Activated CD4-positive, alpha-beta T cell treated with anti-CD3 and anti-CD28 coated beads for 36 hours (primary cell): ENCODE measurements at regions of chr1 and their contacts with region 1.

Region 1: GRCh38 chr1:19390901-19391595 is 78.9 kb downstream of the SLC66A1 start:
- DNase-seq: peak; percentile 77
- ATAC-seq: peak; percentile 52
- H3K4me3 Mint-ChIP-seq: peak overlapping the region; percentile 73
- H3K27ac Mint-ChIP-seq: peak overlapping the region; percentile 95
- H3K4me1 Mint-ChIP-seq: peaks cover 81% of the 10 kb centered on the region
- H3K27me3 Mint-ChIP-seq: no peaks in the 10 kb centered on the region

Region 2: DNA sequence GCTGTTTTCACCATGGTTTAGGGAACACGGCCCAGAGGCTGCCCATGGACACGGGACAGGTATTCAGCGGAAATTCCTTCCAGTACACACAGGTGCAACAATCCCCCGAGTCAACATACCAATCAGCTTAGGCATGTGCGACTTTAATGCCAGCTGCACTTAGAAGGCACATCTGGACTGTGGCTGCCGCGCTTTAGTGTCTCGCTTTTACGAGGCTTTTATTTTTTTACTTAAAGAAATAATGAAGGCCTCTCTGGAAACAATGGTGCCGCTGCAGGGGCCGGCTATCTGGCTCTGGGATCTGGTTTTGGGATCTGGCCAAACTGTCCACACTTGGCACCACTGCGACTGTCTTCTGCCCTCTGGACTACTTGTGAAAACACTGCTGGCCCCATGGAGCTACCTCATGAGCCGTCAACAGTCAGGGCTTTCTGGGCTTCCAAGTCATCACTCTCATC is 23.4 kb before region 1 on chr1:
- CTCF ChIA-PET with region 1: no interaction called
- POLR2A ChIA-PET with region 1: no interaction called
- intact Hi-C with region 1: no loop called
- DNase-seq: no peak
- ATAC-seq: no peak
- H3K4me3 Mint-ChIP-seq: no peak overlapping the region
- H3K27ac Mint-ChIP-seq: no peak overlapping the region
- H3K4me1 Mint-ChIP-seq: peaks cover 12% of the 10 kb centered on the region
- H3K27me3 Mint-ChIP-seq: no peaks in the 10 kb centered on the region

Region 3: DNA sequence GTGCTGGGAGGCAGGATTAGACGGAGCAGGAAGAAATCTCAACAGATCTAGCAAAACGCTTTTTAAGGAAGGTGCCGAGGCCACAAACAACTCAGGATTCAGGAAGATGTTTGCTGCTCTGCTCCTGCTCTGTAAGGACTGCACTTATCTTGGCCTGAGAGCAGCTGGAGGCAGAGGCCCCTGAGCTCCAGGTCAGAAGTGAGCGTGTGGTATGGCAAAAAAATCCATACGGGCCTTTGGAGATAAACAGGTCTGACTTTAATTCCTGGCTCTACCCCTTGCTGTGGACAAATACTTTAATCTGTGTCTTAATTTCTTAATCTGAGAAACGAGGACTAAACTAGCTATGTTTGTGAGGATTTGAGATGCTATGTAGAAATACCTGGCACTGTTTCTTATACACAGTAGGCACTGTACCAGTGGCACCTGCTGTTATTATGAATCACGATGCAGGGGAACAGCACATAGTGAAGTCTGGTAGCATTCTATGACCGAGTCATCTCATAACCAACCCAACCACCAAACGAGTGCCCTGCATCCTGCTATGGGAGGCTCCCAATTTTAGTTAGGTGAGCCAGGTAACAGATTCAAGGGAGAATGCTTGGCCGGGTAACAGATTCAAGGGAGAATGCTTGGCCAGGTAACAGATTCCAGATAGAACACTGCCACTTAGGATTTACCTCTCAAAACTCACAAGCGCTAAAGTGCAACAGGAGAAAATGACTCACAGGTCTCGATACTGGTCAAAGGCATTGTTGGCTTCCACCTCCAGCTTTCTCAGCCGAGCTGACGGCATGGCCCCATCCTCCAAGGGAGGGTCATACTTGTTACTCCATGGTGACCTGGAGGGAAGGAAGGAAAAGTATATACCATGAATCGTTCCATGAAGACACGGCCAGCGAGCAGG is 13.0 kb before region 1 on chr1:
- CTCF ChIA-PET with region 1: interaction called, 12 read pairs
- POLR2A ChIA-PET with region 1: no interaction called
- intact Hi-C with region 1: no loop called
- DNase-seq: peak; percentile 57
- ATAC-seq: peak; percentile 93
- H3K4me3 Mint-ChIP-seq: no peak overlapping the region
- H3K27ac Mint-ChIP-seq: peak overlapping the region; percentile 45
- H3K4me1 Mint-ChIP-seq: peaks cover 23% of the 10 kb centered on the region
- H3K27me3 Mint-ChIP-seq: no peaks in the 10 kb centered on the region

Region 4: GRCh38 chr1:19405761-19406487 is 14.9 kb after region 1 on chr1:
- CTCF ChIA-PET with region 1: interaction called, 19 read pairs
- POLR2A ChIA-PET with region 1: no interaction called
- intact Hi-C with region 1: no loop called
- DNase-seq: no peak
- ATAC-seq: no peak
- H3K4me3 Mint-ChIP-seq: no peak overlapping the region
- H3K27ac Mint-ChIP-seq: peak overlapping the region; percentile 13
- H3K4me1 Mint-ChIP-seq: peaks cover 71% of the 10 kb centered on the region
- H3K27me3 Mint-ChIP-seq: no peaks in the 10 kb centered on the region

Region 5: DNA sequence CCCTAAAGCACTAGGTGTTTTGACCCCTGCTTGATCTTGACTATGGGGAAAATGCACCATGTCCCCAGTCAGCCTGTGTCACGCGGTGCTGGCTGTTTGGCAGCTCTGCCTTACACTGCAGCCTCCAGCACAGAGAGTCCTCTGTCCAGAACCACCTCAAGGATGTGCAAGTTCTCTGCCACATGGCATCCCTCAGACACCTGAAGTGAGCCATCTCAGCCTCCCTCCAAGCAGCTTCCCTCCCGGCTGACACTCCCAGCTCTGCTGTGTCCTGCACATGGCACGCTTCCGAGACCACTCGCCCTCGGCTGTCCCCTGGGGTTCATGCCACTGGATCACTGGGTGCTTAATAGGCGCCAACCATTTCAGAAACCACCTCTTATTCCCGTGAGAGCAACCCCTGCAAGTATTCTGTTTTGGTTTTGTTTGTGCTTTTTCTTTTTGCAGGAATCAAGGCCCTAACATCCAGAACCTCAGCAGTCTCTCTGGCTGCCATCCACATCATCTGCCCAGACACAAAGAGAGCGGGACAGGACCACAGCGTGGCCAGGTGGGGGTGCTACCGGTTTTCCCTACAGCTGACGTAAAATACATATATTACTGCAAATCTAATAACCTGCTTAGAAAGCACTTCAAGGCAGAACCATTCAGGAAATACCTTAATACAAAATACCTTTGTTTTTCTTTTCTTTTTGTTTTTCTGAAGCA is 48.6 kb after region 1 on chr1:
- CTCF ChIA-PET with region 1: interaction called, 4 read pairs
- POLR2A ChIA-PET with region 1: no interaction called
- intact Hi-C with region 1: loop called in 1 of 2 experiments (anchors 5 kb)
- DNase-seq: peak; percentile 60
- ATAC-seq: no peak
- H3K4me3 Mint-ChIP-seq: no peak overlapping the region
- H3K27ac Mint-ChIP-seq: peak overlapping the region; percentile 29
- H3K4me1 Mint-ChIP-seq: peaks cover 87% of the 10 kb centered on the region
- H3K27me3 Mint-ChIP-seq: no peaks in the 10 kb centered on the region

Region 6: GRCh38 chr1:19468397-19468956 is 77.4 kb after region 1 on chr1:
- CTCF ChIA-PET with region 1: interaction called, 3 read pairs
- POLR2A ChIA-PET with region 1: no interaction called
- intact Hi-C with region 1: loop called in 1 of 2 experiments (anchors 5 kb)
- DNase-seq: peak; percentile 82
- ATAC-seq: peak; percentile 81
- H3K4me3 Mint-ChIP-seq: peak overlapping the region; percentile 56
- H3K27ac Mint-ChIP-seq: peak overlapping the region; percentile 88
- H3K4me1 Mint-ChIP-seq: peaks cover 91% of the 10 kb centered on the region
- H3K27me3 Mint-ChIP-seq: no peaks in the 10 kb centered on the region

Region 7: DNA sequence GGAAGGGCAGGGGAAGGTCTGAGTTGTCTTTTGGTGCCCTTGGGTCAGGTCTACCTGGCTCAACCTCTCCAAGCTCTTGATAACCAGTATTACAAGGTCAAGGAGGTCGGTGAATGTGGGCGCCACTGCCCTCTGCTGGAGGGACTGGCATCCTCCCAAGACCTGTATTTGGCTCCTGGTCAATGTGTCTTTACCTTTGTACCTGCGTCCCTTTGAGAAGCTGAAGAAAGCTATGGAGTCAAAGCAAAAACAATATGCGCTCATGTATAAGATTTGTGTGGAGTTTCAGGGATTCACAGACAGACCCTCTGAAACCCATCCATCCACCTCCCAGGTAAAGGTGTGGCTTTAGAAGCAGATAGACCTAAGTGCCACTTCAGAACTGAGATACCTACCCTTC is 191.3 kb after region 1 on chr1:
- CTCF ChIA-PET with region 1: interaction called, 21 read pairs
- POLR2A ChIA-PET with region 1: no interaction called
- intact Hi-C with region 1: loop called (anchors 1 to 2 kb)
- DNase-seq: peak; percentile 89
- ATAC-seq: peak; percentile 96
- H3K4me3 Mint-ChIP-seq: no peak overlapping the region
- H3K27ac Mint-ChIP-seq: no peak overlapping the region
- H3K4me1 Mint-ChIP-seq: peaks cover 8% of the 10 kb centered on the region
- H3K27me3 Mint-ChIP-seq: peaks cover 2% of the 10 kb centered on the region